PC-3 (cell line): ENCODE measurements at regions of chr2 and their contacts with region 1.

Region 1: GRCh38 chr2:106362789-106363188 is 105.4 kb downstream of the RGPD3 start:
- DNase-seq: no peak
- ATAC-seq: no peak
- H3K4me3 ChIP-seq: no peak overlapping the region
- H3K27ac ChIP-seq: no peak overlapping the region
- H3K4me1 ChIP-seq: no peaks in the 10 kb centered on the region
- H3K27me3 ChIP-seq: peaks cover 44% of the 10 kb centered on the region
- CTCF ChIP-seq: no peak

Region 2: DNA sequence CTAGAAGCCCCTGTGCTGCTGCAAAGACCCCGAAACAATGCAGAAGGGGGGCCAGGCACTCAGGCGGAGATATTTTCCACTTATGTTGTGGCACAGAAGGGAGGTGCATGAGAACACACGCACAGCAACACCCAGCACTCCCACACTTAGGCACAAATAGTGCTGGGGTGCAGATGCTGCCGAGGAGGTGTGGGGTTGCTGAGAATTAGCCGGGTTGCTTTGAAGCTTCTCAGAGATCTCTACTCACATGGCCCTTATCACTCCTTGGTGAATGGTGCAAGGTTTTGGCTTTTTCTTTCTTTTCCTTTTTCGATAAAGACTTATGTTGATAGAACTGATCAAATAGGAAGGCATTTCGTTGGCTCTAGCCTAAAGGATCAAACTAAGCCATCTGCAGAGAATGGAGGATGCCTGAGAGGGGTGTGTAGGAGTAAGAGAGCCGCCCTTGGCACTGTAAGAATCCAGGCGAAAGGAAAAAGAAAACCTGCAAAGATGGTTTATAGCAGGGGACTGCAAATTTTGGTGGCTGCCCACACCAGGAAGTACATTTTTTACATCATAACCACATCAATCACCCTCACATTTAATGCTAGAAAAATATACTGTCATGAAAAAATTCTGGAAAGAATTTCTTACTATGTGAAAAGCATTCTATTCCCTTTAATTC is 936.0 kb before region 1 on chr2:
- CTCF ChIA-PET with region 1: no interaction called
- POLR2A ChIA-PET with region 1: interaction called, 10 read pairs
- intact Hi-C with region 1: no loop called
- DNase-seq: no peak
- ATAC-seq: no peak
- H3K4me3 ChIP-seq: no peak overlapping the region
- H3K27ac ChIP-seq: no peak overlapping the region
- H3K4me1 ChIP-seq: no peaks in the 10 kb centered on the region
- H3K27me3 ChIP-seq: no peaks in the 10 kb centered on the region
- CTCF ChIP-seq: no peak

Region 3: GRCh38 chr2:106547164-106547903 is 184.5 kb after region 1 on chr2:
- CTCF ChIA-PET with region 1: no interaction called
- POLR2A ChIA-PET with region 1: no interaction called
- intact Hi-C with region 1: no loop called
- DNase-seq: no peak
- ATAC-seq: no peak
- H3K4me3 ChIP-seq: no peak overlapping the region
- H3K27ac ChIP-seq: no peak overlapping the region
- H3K4me1 ChIP-seq: no peaks in the 10 kb centered on the region
- H3K27me3 ChIP-seq: peaks cover 39% of the 10 kb centered on the region
- CTCF ChIP-seq: no peak